Heart left ventricle (tissue), 16 donors: ENCODE measurements at regions of chr5 and their contacts with region 1.

Region 1: DNA sequence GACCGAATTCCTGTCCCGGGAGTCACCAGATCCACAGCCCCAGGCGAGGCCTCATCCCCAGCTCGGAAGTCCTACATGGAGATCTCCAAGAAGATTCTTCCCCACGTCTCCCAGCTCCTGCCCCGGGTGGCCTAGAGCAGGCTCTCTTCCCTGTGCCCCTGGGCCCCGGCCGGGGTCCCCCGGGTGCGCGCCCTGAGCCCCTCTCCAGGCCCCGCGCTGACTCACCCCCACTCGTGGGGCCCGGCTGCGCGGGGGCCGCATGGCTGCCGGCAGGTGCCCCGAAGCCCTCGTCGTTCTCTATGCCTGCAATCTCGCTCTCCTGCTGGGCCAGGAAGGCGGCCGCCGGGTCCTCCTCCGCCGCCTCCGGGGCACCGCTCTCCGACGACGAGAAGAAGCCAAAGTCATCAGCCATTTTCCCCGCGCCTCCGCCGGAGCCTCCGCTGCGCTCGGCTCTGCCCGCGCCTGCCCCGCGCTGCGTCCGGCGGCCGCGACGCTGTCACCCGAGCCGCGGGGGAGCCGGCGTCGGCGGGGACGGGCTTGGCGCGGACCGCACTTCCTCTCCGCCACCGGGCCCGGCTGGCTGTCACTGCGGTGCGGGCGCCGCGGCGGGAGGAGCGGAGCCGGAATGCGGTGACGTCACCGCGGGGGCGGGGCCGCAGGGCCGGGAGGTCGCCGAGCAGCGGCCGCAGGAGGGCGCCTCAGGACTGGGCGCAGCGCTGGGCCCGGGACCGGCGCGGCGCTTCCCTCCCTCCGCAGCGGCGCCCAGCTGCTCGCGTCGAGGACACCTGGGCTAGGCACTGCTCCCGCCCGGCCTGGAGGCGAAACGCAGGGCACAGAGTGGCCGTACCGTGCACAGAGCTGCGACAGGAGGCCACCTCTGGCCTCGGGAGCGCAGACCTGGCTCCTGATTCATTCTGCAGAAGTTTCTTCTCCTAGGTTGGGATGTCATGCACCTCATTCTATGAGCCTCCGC is at the start of gene CLTB:
- DNase-seq: peak; percentile 92 to 97 (median 94)
- ATAC-seq: peak; percentile 90 to 94 (median 93)
- H3K4me3 ChIP-seq: peak within 1 kb of the TSS; percentile 47 to 100 (median 84)
- H3K27ac ChIP-seq: peak within 1 kb of the TSS; percentile 83 to 99 (median 96)
- H3K4me1 ChIP-seq: peaks cover 8 to 52% (median 42%) of the 10 kb centered on the region in 12 donors
- H3K27me3 ChIP-seq: no peaks in the 10 kb centered on the region
- CTCF ChIP-seq: peak; percentile 43 to 92 (median 83)
- POLR2A ChIP-seq: peak; percentile 85 to 93
- total RNA-seq, gene CLTB: 185 to 401 (median 231) TPM

Region 2: DNA sequence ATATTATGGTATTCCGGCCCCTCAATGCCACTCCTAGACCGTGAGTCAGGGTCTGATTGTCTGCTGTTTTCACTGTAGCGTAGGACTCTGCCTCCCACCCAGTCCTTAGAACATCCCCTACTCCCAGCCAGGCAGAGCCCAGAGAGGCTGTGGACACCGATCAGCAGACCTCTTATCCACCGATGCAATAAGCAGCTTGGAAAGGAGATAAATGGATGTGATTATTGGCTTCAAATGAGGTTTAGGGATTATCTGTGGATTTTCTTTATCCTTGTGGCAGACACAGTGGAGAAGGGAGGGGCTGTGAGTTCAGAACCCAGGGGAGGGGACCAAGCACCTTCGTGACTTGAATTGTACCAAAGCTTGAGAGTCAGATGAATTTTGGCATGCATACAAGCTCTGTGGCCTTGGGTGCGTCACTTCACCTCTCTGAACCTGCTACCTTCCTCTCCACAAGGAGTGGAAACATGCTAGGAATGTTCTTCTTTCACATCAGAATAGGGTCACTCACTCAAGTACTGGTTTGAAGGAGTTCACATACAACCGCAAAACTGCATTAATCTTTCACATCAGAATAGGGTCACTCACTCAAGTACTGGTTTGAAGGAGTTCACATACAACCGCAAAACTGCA is 628.0 kb before region 1 on chr5:
- intact Hi-C with region 1: no loop called
- DNase-seq: no peak
- ATAC-seq: no peak
- H3K4me3 ChIP-seq: no peak overlapping the region
- H3K27ac ChIP-seq: no peak overlapping the region
- H3K4me1 ChIP-seq: no peaks in the 10 kb centered on the region
- H3K27me3 ChIP-seq: peaks cover 0 to 40% (median 2%) of the 10 kb centered on the region in 9 donors
- CTCF ChIP-seq: no peak
- POLR2A ChIP-seq: no peak

Region 3: GRCh38 chr5:176481711-176482110 is 65.5 kb after region 1 on chr5:
- intact Hi-C with region 1: no loop called
- DNase-seq: no peak
- ATAC-seq: no peak
- H3K4me3 ChIP-seq: no peak overlapping the region
- H3K27ac ChIP-seq: no peak overlapping the region
- H3K4me1 ChIP-seq: peaks cover 0 to 10% (median 0%) of the 10 kb centered on the region in 12 donors
- H3K27me3 ChIP-seq: no peaks in the 10 kb centered on the region
- CTCF ChIP-seq: no peak
- POLR2A ChIP-seq: no peak

Region 4: DNA sequence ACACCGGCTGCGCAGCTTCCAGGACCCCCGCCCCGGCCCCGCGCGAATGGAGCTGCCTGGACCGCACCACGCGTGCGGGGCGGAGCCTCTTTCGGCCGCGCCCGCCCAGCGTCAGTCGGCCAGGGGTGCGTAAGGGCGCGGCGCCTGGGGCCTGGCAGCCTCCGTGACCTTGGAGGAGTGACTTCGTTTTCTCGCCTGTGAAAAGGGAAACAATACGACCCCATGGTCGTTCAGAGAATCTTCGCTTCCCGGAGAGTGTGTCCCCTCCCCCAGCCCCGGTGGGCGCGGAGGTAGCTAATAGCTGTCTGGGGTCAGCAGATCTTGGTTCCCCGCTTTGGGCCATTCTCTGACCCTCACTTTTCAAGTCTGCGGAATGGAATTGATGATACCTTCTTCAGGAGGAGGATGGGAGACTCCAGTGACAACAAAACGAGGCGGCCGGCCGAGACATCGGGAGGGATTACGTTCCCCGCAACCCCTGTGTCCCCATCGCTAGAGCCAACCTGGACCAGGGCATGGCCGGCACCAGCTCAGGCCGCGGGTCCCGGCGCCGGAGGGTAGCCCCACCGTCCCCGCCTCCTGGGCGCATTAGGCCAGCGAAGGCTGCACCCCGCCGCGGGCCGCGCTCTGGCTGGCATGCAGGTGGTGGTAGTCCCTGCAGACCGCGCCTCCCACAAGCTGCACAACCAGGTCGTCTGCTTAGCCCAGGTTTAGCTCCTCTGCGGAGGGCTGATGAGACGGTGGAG is 127.4 kb after region 1 on chr5:
- intact Hi-C with region 1: loop called in 6 of 10 experiments (anchors 5 to 10 kb)
- DNase-seq: peak; percentile 78 to 89 (median 81)
- ATAC-seq: peak; percentile 84 to 89 (median 88)
- H3K4me3 ChIP-seq: peak overlapping the region; percentile 41 to 82 (median 74)
- H3K27ac ChIP-seq: peak overlapping the region; percentile 66 to 98 (median 90)
- H3K4me1 ChIP-seq: peaks cover 0 to 50% (median 22%) of the 10 kb centered on the region in 12 donors
- H3K27me3 ChIP-seq: no peaks in the 10 kb centered on the region
- CTCF ChIP-seq: no peak
- POLR2A ChIP-seq: peak; percentile 28 to 66